ENCODE measurements at regions of chr17 and their contacts with region 1.

Region 1: GRCh38 chr17:37770631-37771518 is 26.0 kb upstream of the HNF1B start:
- DNase-seq: no peak
- H3K4me3 ChIP-seq: no peak overlapping the region
- H3K27me3 ChIP-seq: no peaks in the 10 kb centered on the region
- CTCF ChIP-seq: peak; percentile 87

Region 2: DNA sequence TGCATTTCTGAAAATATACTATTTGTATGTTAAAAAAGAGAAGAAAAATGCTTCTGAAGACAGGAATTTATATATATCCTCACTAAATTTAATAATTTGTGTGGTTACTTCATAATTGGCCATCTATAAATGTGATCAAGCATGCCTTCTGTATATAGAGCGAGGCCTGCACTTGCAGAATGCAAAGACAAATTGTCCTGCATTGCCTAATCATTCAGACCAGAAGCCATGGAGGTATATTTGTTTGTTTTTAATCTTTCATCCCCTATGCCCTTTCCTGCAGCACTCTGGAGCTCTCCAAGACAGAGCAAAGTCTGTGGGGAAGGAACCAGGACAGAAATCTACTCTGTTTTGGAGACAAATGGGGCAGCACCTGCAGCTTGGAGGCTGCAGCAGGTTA is 103.8 kb before region 1 on chr17:
- CTCF ChIA-PET with region 1: interaction called, 10 read pairs
- POLR2A ChIA-PET with region 1: no interaction called
- DNase-seq: no peak
- H3K4me3 ChIP-seq: no peak overlapping the region
- H3K27me3 ChIP-seq: no peaks in the 10 kb centered on the region
- CTCF ChIP-seq: no peak

Region 3: DNA sequence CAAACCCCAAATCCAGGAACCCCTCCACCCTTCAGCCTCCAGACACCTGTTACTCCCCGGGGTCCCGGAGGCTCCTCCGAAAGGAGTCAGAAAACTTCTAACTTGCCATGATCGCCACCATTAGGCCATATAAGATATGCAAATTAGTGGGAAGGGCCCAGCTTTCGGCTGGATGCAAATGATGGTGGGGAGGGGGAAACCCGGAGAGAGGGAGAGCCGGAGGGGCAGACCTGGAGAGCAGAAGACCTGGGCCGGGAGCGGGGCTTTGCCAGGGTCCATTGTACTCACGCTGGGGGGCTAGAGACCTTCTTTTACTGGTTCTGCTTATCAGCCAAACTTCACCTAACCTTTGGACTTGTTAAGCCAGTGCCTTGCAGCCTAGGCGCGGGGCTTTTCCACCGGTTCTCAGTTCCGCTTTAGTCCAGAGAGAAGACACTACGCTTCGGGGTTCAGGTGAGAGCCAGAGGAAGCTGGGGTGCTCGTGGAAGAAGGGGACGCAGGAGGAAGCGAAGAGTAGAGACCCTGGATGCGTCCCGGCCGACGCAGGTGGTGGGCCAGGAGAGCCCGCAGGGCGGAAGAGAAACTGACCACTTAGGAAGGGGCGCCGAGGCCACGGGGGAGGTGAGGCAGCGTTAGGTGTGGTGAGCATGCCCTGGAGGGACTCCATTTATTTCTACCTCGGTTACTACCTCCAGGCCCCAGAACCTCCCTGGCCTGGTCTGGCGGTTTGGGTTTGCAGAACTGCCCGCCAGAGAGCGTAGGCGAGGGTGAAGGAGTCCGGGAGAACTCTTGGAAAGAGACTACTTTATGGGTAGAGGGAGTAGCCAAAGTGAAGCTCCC is 25.7 kb before region 1 on chr17 and contains the start of gene HNF1B:
- CTCF ChIA-PET with region 1: interaction called, 18 read pairs
- POLR2A ChIA-PET with region 1: no interaction called
- DNase-seq: no peak
- H3K4me3 ChIP-seq: no peak within 1 kb of the TSS
- H3K27me3 ChIP-seq: peaks cover 50% of the 10 kb centered on the region
- CTCF ChIP-seq: no peak
- polyA plus RNA-seq, gene HNF1B: not detected in 2 replicates

Region 4: DNA sequence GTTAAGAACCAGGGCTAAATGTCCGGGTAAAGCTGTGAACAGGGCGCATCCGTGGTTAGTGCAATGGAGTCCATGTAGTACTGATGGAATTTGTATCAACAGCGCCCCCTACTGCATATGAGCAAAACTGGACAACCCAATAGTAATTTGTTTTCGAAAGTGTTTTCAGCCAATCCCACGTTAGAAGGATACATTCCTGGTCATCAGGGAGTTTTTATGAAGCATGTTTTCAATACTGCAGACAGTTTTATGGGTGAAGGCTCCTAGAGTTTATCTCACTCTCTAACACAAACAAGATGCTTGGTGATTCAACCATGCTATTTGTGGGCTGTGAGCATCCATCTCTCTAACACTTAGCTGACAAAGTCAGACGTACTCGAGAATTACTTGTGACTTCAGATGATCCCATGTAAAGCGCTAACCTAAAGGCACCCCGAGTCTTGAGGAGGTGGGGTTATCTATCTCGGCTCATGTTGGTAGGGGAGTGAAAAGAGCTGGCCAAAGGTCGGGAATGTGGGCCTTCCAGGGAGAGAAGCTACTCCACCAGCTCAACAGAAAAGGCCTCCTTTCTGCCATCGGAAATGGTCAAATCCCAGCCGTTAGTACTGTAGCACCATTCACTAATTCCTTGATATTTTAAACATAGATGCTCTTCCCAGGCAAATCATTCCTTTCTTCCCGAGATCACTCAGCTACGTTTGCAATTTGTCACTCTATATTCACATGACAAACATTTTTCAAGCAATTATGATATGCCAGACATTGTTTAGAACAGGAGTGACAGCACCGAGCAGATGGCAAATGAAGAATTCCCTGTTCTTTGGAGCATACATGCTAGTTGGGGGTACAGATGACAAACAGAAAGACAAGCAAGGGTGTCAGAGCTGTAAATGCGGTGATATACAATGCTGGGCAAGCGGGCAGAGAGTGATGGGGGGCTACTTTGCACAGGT is 20.8 kb after region 1 on chr17:
- CTCF ChIA-PET with region 1: interaction called, 10 read pairs
- POLR2A ChIA-PET with region 1: no interaction called
- DNase-seq: peak; percentile 65
- H3K4me3 ChIP-seq: no peak overlapping the region
- H3K27me3 ChIP-seq: 0 out of 2 replicates have a peak, but pooled peaks cover 4% of the 10 kb centered on the region
- CTCF ChIP-seq: peak; percentile 59

Region 5: DNA sequence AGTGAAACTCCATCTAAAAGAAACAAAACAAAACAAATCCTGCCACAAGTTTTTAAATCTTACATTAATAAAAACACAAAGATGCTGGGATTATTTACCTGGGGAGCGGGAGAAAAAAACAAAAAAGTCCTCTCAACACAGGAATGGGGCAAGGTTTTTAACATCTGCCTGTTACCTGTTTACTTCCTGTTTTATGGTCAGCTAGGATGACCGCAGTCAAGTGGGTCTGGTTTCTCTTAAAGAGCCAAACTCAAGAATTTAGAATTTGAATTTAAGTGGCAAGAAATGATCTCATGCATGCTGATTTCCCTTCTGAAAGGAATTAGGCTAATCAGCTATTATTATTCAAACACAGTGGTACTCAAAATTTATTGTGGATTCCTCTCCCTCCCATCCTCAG is 113.6 kb after region 1 on chr17:
- CTCF ChIA-PET with region 1: no interaction called
- POLR2A ChIA-PET with region 1: no interaction called
- DNase-seq: no peak
- H3K4me3 ChIP-seq: no peak overlapping the region
- H3K27me3 ChIP-seq: no peaks in the 10 kb centered on the region
- CTCF ChIP-seq: no peak